ENCODE measurements at regions of chr11 and their contacts with region 1.

Region 1: GRCh38 chr11:8911029-8911826 is at the start of gene AKIP1:
- DNase-seq: peak; percentile 37 to 93 (median 83)
- ATAC-seq: peak; percentile 77
- H3K4me3 ChIP-seq: peak within 1 kb of the TSS; percentile 76 to 94
- H3K4me3 Mint-ChIP-seq: peak within 1 kb of the TSS; percentile 91
- H3K27ac ChIP-seq: peak within 1 kb of the TSS; percentile 51 to 78
- H3K27ac Mint-ChIP-seq: peak within 1 kb of the TSS; percentile 90
- H3K4me1 ChIP-seq: peaks cover 23% of the 10 kb centered on the region
- H3K4me1 Mint-ChIP-seq: peaks cover 37% of the 10 kb centered on the region
- H3K27me3 ChIP-seq: no peaks in the 10 kb centered on the region
- H3K27me3 Mint-ChIP-seq: no peaks in the 10 kb centered on the region
- CTCF ChIP-seq: no peak
- total RNA-seq, gene AKIP1: 3.9 to 4.2 TPM

Region 2: GRCh38 chr11:8682303-8683114 is 228.7 kb before region 1 on chr11 and contains the starts of genes RPL27A and TRIM66:
- CTCF ChIA-PET with region 1: no interaction called
- POLR2A ChIA-PET with region 1: interaction called, 3 read pairs
- intact Hi-C with region 1: loop called (anchors 2 to 5 kb)
- DNase-seq: peak; percentile 98 to 100 (median 99)
- ATAC-seq: peak; percentile 92
- H3K4me3 ChIP-seq: peak within 1 kb of the TSS; percentile 63 to 99
- H3K4me3 Mint-ChIP-seq: peak within 1 kb of the TSS; percentile 96
- H3K27ac ChIP-seq: peak within 1 kb of the TSS; percentile 82 to 92
- H3K27ac Mint-ChIP-seq: peak within 1 kb of the TSS; percentile 98
- H3K4me1 ChIP-seq: peaks cover 27% of the 10 kb centered on the region
- H3K4me1 Mint-ChIP-seq: peaks cover 48% of the 10 kb centered on the region
- H3K27me3 ChIP-seq: no peaks in the 10 kb centered on the region
- H3K27me3 Mint-ChIP-seq: no peaks in the 10 kb centered on the region
- CTCF ChIP-seq: no peak
- total RNA-seq, gene RPL27A: 1,595 to 1,676 TPM
- total RNA-seq, gene TRIM66: 8.6 to 9.1 TPM

Region 3: DNA sequence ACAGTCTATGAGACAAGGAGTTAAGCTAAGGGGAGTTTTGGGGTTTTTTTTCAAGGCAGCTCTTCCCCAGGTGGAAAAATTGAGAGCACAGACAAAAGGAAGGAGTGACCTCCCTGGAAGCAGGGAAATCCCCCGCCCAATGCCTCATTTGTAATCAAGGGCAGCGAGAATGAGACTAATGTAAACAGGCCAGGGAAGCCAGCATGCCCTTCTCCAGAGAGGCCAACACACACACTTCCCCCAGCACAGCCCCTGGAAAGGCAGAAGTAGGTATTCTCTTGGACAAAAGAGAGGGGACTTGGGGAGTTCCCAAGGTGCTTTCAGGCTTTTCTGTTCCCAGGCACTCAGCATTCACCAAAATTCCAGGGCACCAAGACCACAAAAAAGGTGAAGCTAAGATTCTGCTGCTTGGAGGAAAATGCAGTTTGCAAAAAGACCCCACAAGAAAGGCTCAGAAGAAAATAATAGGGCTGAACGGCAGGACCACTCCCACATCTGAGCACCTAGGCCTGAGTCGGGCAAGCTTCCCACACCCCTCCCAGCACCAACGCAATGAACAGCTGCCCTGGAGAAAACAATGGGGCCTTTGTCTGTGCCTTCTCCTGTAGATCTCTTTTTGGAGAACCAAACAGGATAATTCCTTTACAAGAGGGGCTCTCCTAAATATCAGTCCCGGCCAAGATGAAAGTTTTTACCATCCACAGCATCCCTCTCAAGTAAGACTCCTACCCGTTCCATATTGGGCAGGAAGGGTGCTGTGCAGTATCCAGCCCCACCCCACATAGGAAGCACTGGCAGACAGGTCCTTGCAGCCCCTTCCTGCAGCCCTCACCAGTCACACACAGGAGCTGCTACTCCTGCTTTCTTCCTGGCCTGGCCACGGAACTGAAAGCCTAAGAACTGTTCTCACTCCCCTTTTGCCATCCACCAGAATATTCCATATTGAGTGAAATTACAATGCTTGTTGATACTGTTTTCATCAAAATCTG is 71.0 kb before region 1 on chr11:
- CTCF ChIA-PET with region 1: no interaction called
- POLR2A ChIA-PET with region 1: no interaction called
- intact Hi-C with region 1: loop called in 1 of 2 experiments (anchors 10 kb)
- DNase-seq: no peak
- ATAC-seq: no peak
- H3K4me3 ChIP-seq: no peak overlapping the region
- H3K4me3 Mint-ChIP-seq: no peak overlapping the region
- H3K27ac ChIP-seq: no peak overlapping the region
- H3K27ac Mint-ChIP-seq: no peak overlapping the region
- H3K4me1 ChIP-seq: no peaks in the 10 kb centered on the region
- H3K4me1 Mint-ChIP-seq: no peaks in the 10 kb centered on the region
- H3K27me3 ChIP-seq: peaks cover 0 to 3% of the 10 kb centered on the region in 2 experiments
- H3K27me3 Mint-ChIP-seq: peaks cover 28% of the 10 kb centered on the region
- CTCF ChIP-seq: no peak

Region 4: DNA sequence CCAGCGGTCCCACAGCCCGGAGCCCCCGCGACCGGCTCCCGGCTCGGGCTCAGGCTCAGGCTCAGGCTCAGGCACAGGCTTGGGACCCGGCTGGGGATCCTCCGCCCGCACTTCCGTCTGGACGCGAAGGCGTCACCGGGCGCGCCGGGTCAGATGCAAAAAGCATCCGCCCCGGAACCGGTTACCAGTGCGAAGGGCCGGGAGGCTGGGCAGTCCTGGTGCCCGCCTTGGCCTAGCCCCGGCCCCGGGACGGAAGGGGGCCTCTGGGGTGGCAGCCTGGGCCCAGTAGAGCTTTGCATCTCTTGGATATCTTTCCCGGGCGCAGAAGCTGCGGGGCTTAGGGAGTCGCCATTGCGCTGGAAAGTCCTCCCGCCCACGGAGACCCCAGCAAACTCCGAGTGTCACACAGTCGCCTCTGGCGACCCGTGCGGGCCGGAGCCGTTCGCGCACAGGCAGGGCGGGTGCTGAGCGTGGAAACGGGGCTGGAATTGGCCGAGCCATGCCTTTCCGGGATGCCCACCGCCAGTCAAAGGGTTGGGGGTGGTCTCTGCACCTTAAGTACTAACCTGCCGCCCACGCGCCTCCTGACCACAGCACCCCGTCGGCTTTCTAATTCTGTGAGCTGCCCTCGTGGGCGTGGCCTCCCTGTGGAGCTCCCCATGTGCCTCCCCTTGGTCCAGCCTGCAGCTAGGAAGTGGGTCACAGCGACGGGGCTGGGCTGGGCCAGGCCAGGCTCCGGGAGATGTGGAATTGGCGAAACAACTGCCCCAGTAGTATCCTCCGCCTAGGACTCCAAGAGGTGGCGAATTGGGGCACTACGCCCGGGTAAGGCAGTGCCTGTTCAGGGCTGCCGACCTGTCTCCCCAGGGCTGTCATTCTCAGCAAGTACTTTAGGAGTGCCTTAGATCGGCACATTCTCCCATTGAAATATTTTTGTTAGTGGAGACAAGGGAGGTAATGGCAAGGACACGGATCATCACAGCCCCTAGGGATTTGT is 53.4 kb after region 1 on chr11 and contains the start of gene TMEM9B:
- CTCF ChIA-PET with region 1: interaction called, 23 read pairs
- POLR2A ChIA-PET with region 1: interaction called, 8 read pairs
- intact Hi-C with region 1: loop called (anchors 1 kb)
- DNase-seq: peak; percentile 48 to 89 (median 75)
- ATAC-seq: peak; percentile 72
- H3K4me3 ChIP-seq: peak within 1 kb of the TSS; percentile 93 to 98
- H3K4me3 Mint-ChIP-seq: peak within 1 kb of the TSS; percentile 98
- H3K27ac ChIP-seq: peak within 1 kb of the TSS; percentile 94 to 99
- H3K27ac Mint-ChIP-seq: peak within 1 kb of the TSS; percentile 98
- H3K4me1 ChIP-seq: peaks cover 24% of the 10 kb centered on the region
- H3K4me1 Mint-ChIP-seq: peaks cover 36% of the 10 kb centered on the region
- H3K27me3 ChIP-seq: no peaks in the 10 kb centered on the region
- H3K27me3 Mint-ChIP-seq: no peaks in the 10 kb centered on the region
- CTCF ChIP-seq: no peak
- total RNA-seq, gene TMEM9B: 27.5 to 28.5 TPM

Region 5: DNA sequence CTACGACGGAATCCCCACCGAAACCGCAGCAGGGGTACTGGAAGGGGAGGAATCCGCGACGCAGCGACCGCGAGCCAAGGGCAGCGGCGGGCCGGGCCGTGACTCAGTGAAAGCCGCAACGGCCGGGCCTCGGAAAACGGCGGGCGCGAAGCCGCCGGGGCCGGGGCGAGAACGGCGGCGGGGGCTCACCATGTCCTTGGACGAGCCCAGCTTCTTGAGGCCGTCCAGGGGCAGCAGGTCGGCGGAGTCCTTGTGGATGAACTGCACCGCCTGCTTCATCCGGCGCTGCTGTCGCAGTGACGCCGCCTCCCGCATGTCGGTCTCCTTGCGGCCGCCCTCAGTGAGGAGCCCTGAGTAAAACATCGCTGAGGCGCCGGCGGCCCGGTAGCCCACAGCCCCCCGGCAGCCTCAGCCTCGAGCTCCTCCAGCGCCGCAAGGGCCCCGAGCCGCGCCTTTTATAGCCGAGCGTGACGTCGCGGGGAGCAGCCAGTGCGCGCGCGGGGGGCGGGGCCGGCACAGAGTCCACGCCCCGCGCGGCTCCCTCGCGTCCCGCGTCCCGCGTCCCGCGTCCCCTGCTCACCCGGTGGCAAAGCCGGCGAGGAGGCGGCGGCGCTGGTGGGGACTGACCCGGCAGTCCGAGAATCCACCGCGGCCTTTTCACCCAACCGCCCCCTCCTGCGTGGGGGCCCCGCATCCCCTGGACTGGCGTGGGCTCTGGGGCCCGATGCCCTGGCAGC is 92.5 kb after region 1 on chr11 and contains the start of gene NRIP3:
- CTCF ChIA-PET with region 1: no interaction called
- POLR2A ChIA-PET with region 1: no interaction called
- intact Hi-C with region 1: loop called in 1 of 2 experiments (anchors 5 kb)
- DNase-seq: peak; percentile 58 to 91 (median 82)
- ATAC-seq: peak; percentile 92
- H3K4me3 ChIP-seq: peak within 1 kb of the TSS; percentile 47 to 66
- H3K4me3 Mint-ChIP-seq: peak within 1 kb of the TSS; percentile 76
- H3K27ac ChIP-seq: no peak within 1 kb of the TSS
- H3K27ac Mint-ChIP-seq: peak within 1 kb of the TSS; percentile 24
- H3K4me1 ChIP-seq: peaks cover 10% of the 10 kb centered on the region
- H3K4me1 Mint-ChIP-seq: peaks cover 15% of the 10 kb centered on the region
- H3K27me3 ChIP-seq: peaks cover 7 to 24% of the 10 kb centered on the region in 2 experiments
- H3K27me3 Mint-ChIP-seq: peaks cover 32% of the 10 kb centered on the region
- CTCF ChIP-seq: no peak
- total RNA-seq, gene NRIP3: 8.8 to 10.1 TPM

Region 6: DNA sequence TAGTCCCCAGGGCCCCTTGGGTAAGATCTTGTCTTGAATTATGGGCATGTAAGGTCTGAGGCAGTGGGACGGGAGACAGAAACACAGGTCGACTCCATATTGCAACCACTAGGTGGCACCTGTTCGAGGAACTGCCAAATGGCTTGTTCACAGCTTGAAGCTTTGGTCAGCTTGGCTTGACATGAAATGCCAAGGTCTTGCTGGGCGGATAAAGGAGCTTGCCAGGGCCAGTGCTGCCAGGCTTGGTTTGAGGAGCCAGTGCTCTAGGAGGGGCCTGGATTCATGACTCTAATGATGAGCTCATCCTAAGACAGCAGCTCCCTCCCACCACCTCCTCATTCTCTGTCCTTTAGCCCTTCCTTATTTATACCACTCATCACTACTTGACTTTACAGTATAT is 104.4 kb after region 1 on chr11:
- CTCF ChIA-PET with region 1: interaction called, 5 read pairs
- POLR2A ChIA-PET with region 1: no interaction called
- intact Hi-C with region 1: loop called in 1 of 2 experiments (anchors 5 kb)
- DNase-seq: peak; percentile 19 to 78 (median 55)
- ATAC-seq: peak; percentile 71
- H3K4me3 ChIP-seq: no peak overlapping the region
- H3K4me3 Mint-ChIP-seq: no peak overlapping the region
- H3K27ac ChIP-seq: no peak overlapping the region
- H3K27ac Mint-ChIP-seq: no peak overlapping the region
- H3K4me1 ChIP-seq: peaks cover 5% of the 10 kb centered on the region
- H3K4me1 Mint-ChIP-seq: peaks cover 12% of the 10 kb centered on the region
- H3K27me3 ChIP-seq: peaks cover 0 to 3% of the 10 kb centered on the region in 2 experiments
- H3K27me3 Mint-ChIP-seq: peaks cover 2% of the 10 kb centered on the region
- CTCF ChIP-seq: peak; percentile 73

Region 7: DNA sequence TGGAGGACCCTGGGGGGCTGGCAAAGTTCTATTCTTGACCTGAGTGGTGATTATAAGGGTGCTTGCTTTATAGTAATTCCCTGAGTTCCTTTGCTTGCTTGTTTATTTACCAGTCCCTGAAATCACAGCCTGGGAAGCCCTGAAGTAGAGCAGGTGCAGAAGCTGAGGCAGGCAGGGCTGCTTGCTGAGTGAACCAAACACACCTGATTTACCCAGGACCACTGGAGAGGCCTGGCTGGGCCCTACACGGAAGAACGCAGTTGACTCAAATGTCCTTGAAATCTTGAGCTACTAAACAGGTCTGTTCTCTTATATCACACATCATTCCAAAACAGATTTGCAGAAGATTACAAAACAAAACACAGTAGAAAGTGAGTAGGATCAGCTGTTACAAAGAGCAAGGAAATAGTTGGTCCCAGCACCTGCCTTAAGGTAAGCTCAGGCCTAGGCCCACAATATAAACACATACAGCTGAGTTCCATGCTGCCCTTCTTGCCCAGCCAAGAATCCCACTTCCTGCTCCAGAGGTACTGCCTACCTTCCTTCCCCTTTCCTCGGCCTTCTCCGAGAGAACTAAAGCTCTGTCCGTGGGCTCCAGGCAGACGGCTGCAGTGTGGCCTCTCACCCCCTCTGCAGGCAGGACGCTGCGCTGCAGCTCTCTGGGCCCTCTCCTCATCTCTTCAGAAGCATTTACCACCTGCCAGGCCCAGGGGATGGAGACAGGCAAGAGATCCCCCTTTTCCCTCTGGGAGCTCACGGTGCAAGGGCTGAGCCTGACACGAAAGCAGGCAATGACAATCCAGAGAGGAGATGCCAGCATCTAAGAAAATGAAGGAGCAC is 226.3 kb after region 1 on chr11:
- CTCF ChIA-PET with region 1: interaction called, 15 read pairs
- POLR2A ChIA-PET with region 1: no interaction called
- intact Hi-C with region 1: loop called (anchors 1 kb)
- DNase-seq: peak; percentile 28 to 76 (median 62)
- ATAC-seq: peak; percentile 96
- H3K4me3 ChIP-seq: no peak overlapping the region
- H3K4me3 Mint-ChIP-seq: no peak overlapping the region
- H3K27ac ChIP-seq: no peak overlapping the region
- H3K27ac Mint-ChIP-seq: no peak overlapping the region
- H3K4me1 ChIP-seq: no peaks in the 10 kb centered on the region
- H3K4me1 Mint-ChIP-seq: peaks cover 9% of the 10 kb centered on the region
- H3K27me3 ChIP-seq: no peaks in the 10 kb centered on the region
- H3K27me3 Mint-ChIP-seq: no peaks in the 10 kb centered on the region
- CTCF ChIP-seq: peak; percentile 77